GM13977 (cell line): ENCODE measurements at regions of chr4 and their contacts with region 1.

Region 1: GRCh38 chr4:121192480-121192879 is 28.4 kb upstream of the TNIP3 start:
- DNase-seq: peak; percentile 12
- CTCF ChIP-seq: peak; percentile 71

Region 2: DNA sequence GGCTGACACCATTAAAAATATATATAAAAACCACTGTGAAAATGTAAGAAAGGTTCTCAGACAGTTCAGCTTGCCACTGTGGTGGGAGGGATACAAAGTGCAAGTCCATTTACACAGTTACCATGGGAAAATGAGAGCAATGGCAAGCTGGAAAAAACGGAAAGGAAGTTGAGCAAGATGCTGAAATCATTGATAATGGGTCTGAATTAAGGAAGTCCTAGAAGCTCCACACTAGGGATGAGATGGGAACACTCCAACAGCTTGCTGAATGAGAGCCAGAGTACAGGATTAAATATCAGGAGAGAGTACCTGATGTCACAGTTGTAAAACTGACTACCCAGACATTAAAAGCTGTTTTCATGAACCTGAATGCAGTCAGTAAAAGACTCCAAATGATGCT is 488.6 kb before region 1 on chr4:
- in situ Hi-C with region 1: no loop called
- DNase-seq: no peak
- CTCF ChIP-seq: no peak

Region 3: GRCh38 chr4:121108557-121108956 is 83.9 kb before region 1 on chr4:
- in situ Hi-C with region 1: no loop called
- DNase-seq: no peak
- CTCF ChIP-seq: no peak

Region 4: DNA sequence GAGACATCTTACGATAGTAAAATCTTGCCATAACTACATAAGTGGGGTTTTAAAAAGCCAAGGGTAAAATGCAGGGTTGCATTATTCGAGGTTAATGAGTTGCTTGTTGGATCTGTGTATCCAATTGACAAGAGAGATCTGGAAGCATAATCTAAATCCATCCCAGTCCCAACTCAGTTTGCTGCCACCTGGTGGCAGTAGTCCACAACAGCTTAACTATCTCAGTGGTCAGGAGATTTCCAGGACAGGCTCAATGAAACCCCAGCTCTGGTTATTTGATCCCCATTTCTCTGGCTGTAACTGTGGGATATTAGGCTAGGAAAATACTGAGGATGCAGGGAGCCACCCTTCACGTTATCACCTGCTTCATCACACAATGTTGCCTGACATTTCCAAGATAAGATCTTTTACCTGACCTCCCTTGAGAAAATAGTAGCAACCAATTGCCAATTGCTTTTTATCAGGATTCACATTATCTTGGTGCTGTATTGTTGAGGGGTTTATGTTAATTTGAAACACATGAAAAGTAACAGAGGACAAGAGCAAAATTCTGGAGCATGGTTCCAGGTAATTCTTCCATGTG is 59.8 kb after region 1 on chr4:
- in situ Hi-C with region 1: loop called (anchors 10 kb)
- DNase-seq: peak; percentile 55
- CTCF ChIP-seq: peak; percentile 83

Region 5: GRCh38 chr4:121726642-121727268 is 534.3 kb after region 1 on chr4:
- in situ Hi-C with region 1: no loop called
- DNase-seq: peak; percentile 58
- CTCF ChIP-seq: peak; percentile 68